HEK293 (cell line): ENCODE measurements at regions of chr20 and their contacts with region 1.

Region 1: DNA sequence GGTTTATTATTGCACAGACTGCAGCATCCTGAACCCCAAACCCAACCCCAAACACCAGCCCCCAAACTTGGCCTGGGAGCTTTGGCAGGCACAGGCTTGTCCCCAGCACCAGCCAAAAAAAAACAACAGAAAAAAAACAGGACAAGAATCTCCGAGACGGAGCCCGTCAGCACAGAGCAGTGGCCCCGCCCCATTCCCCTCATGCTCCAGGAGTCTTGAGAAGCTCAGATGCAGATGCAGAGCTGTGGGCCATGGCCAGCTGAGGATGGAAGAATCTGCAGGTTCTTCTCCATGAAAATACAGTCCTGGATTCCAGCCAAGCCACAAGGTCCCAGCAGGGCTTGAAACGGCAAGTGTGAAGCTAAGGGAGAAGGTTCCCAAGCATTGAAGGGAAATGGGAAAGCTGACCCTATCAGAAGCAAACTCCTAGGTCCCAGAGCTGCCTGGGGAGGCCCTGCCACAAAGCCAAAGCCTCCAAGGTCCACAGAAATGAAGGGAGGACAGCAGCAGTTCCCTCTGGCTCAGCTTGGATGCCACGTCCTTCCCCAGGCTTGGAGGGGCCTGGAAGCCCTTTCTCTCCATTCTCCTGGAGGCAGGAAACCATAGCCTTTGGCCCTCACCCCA is 75.2 kb downstream of the JPH2 start:
- H3K4me3 ChIP-seq: no peak overlapping the region
- H3K27ac ChIP-seq: no peak overlapping the region; the same call in 1 of the 2 replicates
- H3K4me1 ChIP-seq: no peaks in the 10 kb centered on the region; the same call in 1 of the 2 replicates
- CTCF ChIP-seq: no peak

Region 2: GRCh38 chr20:44050925-44051660 is 60.7 kb before region 1 on chr20:
- CTCF ChIA-PET with region 1: no interaction called
- POLR2A ChIA-PET with region 1: no interaction called
- H3K4me3 ChIP-seq: no peak overlapping the region
- H3K27ac ChIP-seq: no peak overlapping the region
- H3K4me1 ChIP-seq: no peaks in the 10 kb centered on the region
- CTCF ChIP-seq: no peak

Region 3: DNA sequence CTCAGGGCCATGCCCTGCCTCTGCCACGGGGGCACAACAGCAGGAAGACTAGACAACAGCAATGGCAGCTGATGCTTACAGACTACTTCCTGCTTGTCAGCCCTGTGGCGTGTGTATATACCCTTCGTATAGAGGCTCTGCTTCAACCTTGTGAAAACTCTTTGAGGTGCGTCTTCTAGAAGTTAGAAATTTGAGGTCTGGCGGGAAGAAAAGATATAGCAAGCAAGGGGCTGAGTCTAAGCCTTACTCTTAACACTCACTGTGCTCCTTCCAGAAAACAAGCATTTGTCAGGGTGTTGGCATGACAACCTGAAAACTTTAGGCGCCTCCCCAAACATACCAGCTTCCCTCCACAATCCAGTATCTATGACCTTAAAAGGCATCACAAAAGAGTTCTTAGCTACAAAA is 41.8 kb after region 1 on chr20:
- CTCF ChIA-PET with region 1: interaction called, 10 read pairs
- POLR2A ChIA-PET with region 1: no interaction called
- H3K4me3 ChIP-seq: no peak overlapping the region
- H3K27ac ChIP-seq: no peak overlapping the region
- H3K4me1 ChIP-seq: no peaks in the 10 kb centered on the region
- CTCF ChIP-seq: no peak

Region 4: DNA sequence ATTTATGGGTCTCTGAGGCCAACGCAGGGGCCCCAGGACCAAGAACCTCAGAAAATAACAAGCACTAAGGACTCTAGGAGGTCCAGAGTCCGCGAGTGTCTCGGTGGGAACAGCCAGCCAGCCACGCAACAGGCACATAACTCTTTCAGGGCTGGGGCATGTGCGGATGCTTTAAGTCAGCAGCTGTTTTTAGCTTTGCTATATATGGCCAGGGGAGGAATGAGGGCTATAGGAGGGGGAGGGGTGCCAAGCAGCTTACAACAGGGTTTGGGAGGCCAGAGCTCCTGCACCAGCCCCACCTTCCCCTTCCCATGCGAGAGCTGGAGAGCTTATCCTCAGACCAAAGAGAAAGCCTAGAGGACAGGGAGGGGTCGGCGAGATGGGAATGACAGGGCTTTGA is 69.0 kb after region 1 on chr20:
- CTCF ChIA-PET with region 1: interaction called, 19 read pairs
- POLR2A ChIA-PET with region 1: no interaction called
- H3K4me3 ChIP-seq: no peak overlapping the region
- H3K27ac ChIP-seq: no peak overlapping the region
- H3K4me1 ChIP-seq: no peaks in the 10 kb centered on the region
- CTCF ChIP-seq: no peak

Region 5: DNA sequence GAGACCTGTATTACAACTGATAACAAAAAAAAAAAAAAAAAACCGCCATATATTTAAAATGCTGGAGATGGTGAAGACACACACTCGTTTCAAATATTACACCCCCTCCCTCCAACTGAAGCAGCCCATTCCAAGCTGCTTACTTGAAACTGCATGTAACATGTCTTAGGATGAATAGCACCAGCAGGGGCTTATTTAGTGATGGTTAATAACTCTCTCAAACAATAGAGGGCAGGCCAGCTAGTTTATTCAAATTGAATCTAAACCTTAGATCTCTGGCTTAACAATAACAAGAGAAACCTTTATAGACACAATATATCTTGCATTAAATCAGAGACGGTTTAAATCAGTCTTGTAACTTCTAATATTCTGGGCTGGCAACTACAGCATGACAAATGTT is 84.4 kb after region 1 on chr20:
- CTCF ChIA-PET with region 1: interaction called, 316 read pairs
- POLR2A ChIA-PET with region 1: interaction called, 21 read pairs
- H3K4me3 ChIP-seq: no peak overlapping the region
- H3K27ac ChIP-seq: no peak overlapping the region
- H3K4me1 ChIP-seq: no peaks in the 10 kb centered on the region
- CTCF ChIP-seq: peak; percentile 10; the same call in 1 of the 2 replicates

Region 6: DNA sequence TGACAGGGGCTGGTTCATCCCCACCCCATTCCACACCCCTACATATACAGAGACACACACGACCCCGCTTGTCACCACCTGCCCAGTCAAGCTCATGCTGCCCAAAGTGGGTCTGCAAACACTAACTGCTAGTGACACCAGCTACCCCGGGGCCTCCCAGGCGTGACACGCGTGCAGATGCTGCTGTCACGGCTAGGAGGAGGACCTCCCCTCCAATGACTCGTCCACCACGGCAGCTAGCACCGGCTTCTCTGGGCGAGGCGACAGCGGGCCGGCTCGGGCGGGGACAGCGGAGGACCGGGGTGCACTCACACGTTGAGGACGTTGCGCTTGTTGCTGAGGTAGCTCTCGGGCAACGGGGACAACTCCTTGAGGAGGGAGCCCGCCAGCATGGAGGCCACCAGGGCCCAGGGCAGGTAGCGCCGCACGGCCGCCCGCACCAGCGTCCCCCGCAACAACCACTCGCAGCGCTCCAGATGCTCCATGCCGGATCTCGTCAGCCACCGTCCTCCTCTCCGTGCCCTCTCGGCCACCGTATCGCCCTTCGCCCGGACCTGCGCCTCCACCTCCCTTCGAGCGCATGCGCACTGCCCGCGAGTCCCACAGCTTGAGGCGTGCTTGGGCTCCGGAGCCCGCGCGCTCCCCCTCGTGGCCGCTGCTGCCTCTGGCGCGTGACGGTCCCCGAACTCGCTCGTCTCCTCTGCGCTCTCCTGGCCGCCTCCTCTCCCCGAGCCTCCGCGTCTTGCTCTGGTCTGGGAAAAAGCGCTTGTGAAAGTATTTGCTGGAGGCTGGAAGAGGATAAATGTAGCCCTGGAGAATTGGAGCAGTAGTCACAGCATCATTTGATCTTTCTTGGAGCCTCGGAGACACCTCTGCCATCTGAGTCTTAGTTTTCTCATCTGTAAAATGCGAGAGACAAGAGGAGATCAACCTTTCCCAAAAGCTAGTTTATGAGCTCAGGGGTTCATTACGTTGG is 199.1 kb after region 1 on chr20 and contains the start of gene FITM2:
- CTCF ChIA-PET with region 1: interaction called, 16 read pairs
- POLR2A ChIA-PET with region 1: no interaction called
- H3K4me3 ChIP-seq: peak within 1 kb of the TSS; percentile 68
- H3K27ac ChIP-seq: peak within 1 kb of the TSS; percentile 37; the same call in 1 of the 2 replicates
- H3K4me1 ChIP-seq: no peaks in the 10 kb centered on the region
- CTCF ChIP-seq: peak; percentile 100